ENCODE measurements at regions of chr13 and their contacts with region 1.

Region 1: DNA sequence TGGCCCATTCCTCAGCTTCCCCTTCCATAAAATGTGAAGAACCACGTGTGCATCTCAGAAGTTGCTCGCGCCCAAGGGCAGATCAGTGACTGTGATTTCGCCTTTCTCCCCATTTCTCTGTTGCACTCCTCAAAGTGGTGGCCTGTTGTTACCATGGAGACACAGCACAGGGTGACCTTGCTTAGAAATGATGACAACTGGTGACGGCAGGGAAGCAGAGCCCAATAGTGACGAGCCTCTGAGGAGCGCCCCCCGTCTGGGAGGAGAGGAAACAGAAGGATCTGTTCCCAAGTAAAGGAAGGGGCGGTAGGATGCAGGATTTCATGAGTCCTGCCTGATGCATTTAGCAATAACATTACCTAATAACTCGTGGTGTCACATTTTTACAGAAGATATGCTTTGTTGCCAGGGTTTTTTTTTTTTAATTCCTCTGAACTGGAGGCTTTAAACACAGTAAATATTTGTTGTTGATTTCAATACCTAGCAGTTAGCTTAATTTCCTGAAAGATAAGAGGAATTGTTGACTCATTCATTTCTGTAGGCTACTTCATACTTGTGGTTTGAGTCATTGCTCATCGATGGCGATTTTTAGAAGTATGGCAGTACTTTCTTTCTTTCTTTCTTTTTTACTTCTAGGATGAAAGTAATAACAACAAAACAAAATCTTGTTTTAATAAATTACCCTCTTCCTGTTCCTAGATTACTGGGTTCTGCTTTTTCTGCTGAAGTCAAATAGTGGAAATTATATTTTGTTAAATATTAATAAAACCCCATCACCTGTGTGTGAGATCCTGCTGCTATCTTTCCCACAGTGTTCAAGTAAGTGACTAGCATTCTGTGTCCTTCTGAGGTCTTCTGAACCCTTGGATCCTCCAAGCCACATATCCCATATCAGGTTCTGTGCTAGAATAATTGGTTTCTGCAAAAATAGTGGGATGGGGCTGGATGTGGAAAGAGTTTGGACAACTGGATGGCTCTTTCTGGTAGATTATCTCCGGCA is 36.0 kb downstream of the MBNL2 start:
- DNase-seq: peak; percentile 87
- ATAC-seq: peak; percentile 73
- H3K4me3 ChIP-seq: peak overlapping the region in 1 of 3 experiments; percentile 32; a peak in 1 of 6 replicates
- H3K27ac ChIP-seq: peak overlapping the region; percentile 92
- H3K4me1 ChIP-seq: peaks cover 86% of the 10 kb centered on the region
- H3K27me3 ChIP-seq: no peaks in the 10 kb centered on the region
- CTCF ChIP-seq: peak; percentile 61
- EP300 ChIP-seq: peak; percentile 68 to 91
- POLR2A ChIP-seq: no peak
- RAD21 ChIP-seq: no peak

Region 2: GRCh38 chr13:97212601-97213040 is 45.5 kb before region 1 on chr13:
- CTCF ChIA-PET with region 1: no interaction called
- POLR2A ChIA-PET with region 1: no interaction called
- in situ Hi-C with region 1: no loop called
- intact Hi-C with region 1: no loop called
- DNase-seq: no peak
- ATAC-seq: peak; percentile 89
- H3K4me3 ChIP-seq: no peak overlapping the region
- H3K27ac ChIP-seq: no peak overlapping the region
- H3K4me1 ChIP-seq: peaks cover 23% of the 10 kb centered on the region
- H3K27me3 ChIP-seq: no peaks in the 10 kb centered on the region
- CTCF ChIP-seq: peak; percentile 60
- EP300 ChIP-seq: no peak
- POLR2A ChIP-seq: no peak
- RAD21 ChIP-seq: peak; percentile 33; the same call in 1 of the 2 replicates

Region 3: GRCh38 chr13:97307882-97308624 is 50.0 kb after region 1 on chr13:
- CTCF ChIA-PET with region 1: no interaction called
- POLR2A ChIA-PET with region 1: interaction called, 3 read pairs
- in situ Hi-C with region 1: no loop called
- intact Hi-C with region 1: loop called (anchors 2 kb)
- DNase-seq: peak; percentile 81
- ATAC-seq: peak; percentile 89
- H3K4me3 ChIP-seq: peak overlapping the region in 1 of 3 experiments; percentile 30; a peak in 1 of 6 replicates
- H3K27ac ChIP-seq: peak overlapping the region; percentile 78
- H3K4me1 ChIP-seq: peaks cover 80% of the 10 kb centered on the region
- H3K27me3 ChIP-seq: no peaks in the 10 kb centered on the region
- CTCF ChIP-seq: no peak
- EP300 ChIP-seq: peak in 1 of 2 experiments; percentile 56; a peak in 1 of 4 replicates
- POLR2A ChIP-seq: no peak
- RAD21 ChIP-seq: no peak

Measured in HepG2 (cell line).